ENCODE measurements at regions of chr15 and their contacts with region 1.

Region 1: GRCh38 chr15:45166834-45167630 is 20.7 kb downstream of the SHF start:
- DNase-seq: peak; percentile 62
- ATAC-seq: peak; percentile 76
- H3K4me3 ChIP-seq: peak overlapping the region; percentile 69 to 76 (median 75)
- H3K27ac ChIP-seq: peak overlapping the region; percentile 76
- H3K4me1 ChIP-seq: peaks cover 41% of the 10 kb centered on the region
- H3K27me3 ChIP-seq: no peaks in the 10 kb centered on the region
- CTCF ChIP-seq: peak; percentile 68
- EP300 ChIP-seq: no peak
- POLR2A ChIP-seq: peak; percentile 30 to 34; a peak in 3 of 4 replicates
- RAD21 ChIP-seq: no peak

Region 2: DNA sequence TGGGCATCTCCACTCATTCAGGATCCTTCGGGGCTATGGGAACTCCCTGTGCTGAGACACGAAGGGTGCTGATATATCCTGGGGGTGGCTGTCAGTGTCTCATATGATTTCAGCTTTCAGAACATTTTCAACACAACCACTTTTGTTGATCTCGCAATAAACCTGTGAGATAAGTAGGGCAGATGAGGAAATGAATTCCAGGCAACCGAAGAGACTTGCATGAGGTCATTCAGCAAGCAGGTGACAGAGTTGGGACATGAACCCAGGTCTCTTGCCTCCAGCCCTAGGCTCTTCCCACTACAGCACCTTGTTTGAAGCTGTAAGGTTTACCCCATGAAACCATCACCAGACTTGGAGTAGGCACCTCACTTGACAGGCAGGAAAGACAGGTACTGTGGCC is 20.6 kb before region 1 on chr15:
- CTCF ChIA-PET with region 1: no interaction called
- POLR2A ChIA-PET with region 1: no interaction called
- in situ Hi-C with region 1: no loop called
- intact Hi-C with region 1: no loop called
- DNase-seq: no peak
- ATAC-seq: no peak
- H3K4me3 ChIP-seq: no peak overlapping the region
- H3K27ac ChIP-seq: no peak overlapping the region
- H3K4me1 ChIP-seq: peaks cover 8% of the 10 kb centered on the region
- H3K27me3 ChIP-seq: peaks cover 0 to 27% of the 10 kb centered on the region in 2 experiments; a peak in 1 of 5 replicates
- CTCF ChIP-seq: no peak
- EP300 ChIP-seq: no peak
- POLR2A ChIP-seq: no peak
- RAD21 ChIP-seq: no peak

Region 3: GRCh38 chr15:45187894-45188830 is 21.1 kb after region 1 on chr15 and contains the start of gene SHF:
- CTCF ChIA-PET with region 1: no interaction called
- POLR2A ChIA-PET with region 1: interaction called, 12 read pairs
- in situ Hi-C with region 1: no loop called
- intact Hi-C with region 1: loop called (anchors 1 kb)
- DNase-seq: peak; percentile 31
- ATAC-seq: peak; percentile 69
- H3K4me3 ChIP-seq: peak within 1 kb of the TSS; percentile 79 to 83 (median 82)
- H3K27ac ChIP-seq: peak within 1 kb of the TSS; percentile 50
- H3K4me1 ChIP-seq: peaks cover 45% of the 10 kb centered on the region
- H3K27me3 ChIP-seq: peaks cover 0 to 3% of the 10 kb centered on the region in 2 experiments; a peak in 1 of 5 replicates
- CTCF ChIP-seq: no peak
- EP300 ChIP-seq: no peak
- POLR2A ChIP-seq: peak in 1 of 2 experiments; percentile 65; a peak in 1 of 4 replicates
- RAD21 ChIP-seq: no peak
- total RNA-seq, gene SHF: 16.8 and 25.5 TPM in 2 replicates

Region 4: GRCh38 chr15:45263003-45263402 is 96.0 kb after region 1 on chr15:
- CTCF ChIA-PET with region 1: interaction called, 9 read pairs
- POLR2A ChIA-PET with region 1: no interaction called
- in situ Hi-C with region 1: loop called (anchors 5 kb)
- intact Hi-C with region 1: no loop called
- DNase-seq: peak; percentile 12
- ATAC-seq: peak; percentile 60
- H3K4me3 ChIP-seq: peak overlapping the region in 1 of 3 experiments; percentile 12; a peak in 1 of 6 replicates
- H3K27ac ChIP-seq: peak overlapping the region; percentile 2
- H3K4me1 ChIP-seq: peaks cover 33% of the 10 kb centered on the region
- H3K27me3 ChIP-seq: no peaks in the 10 kb centered on the region
- CTCF ChIP-seq: no peak
- EP300 ChIP-seq: no peak; a peak in 1 of 4 replicates
- POLR2A ChIP-seq: no peak
- RAD21 ChIP-seq: no peak